Left lung (tissue), 14 donors: ENCODE measurements at regions of chr1 and their contacts with region 1.

Region 1: DNA sequence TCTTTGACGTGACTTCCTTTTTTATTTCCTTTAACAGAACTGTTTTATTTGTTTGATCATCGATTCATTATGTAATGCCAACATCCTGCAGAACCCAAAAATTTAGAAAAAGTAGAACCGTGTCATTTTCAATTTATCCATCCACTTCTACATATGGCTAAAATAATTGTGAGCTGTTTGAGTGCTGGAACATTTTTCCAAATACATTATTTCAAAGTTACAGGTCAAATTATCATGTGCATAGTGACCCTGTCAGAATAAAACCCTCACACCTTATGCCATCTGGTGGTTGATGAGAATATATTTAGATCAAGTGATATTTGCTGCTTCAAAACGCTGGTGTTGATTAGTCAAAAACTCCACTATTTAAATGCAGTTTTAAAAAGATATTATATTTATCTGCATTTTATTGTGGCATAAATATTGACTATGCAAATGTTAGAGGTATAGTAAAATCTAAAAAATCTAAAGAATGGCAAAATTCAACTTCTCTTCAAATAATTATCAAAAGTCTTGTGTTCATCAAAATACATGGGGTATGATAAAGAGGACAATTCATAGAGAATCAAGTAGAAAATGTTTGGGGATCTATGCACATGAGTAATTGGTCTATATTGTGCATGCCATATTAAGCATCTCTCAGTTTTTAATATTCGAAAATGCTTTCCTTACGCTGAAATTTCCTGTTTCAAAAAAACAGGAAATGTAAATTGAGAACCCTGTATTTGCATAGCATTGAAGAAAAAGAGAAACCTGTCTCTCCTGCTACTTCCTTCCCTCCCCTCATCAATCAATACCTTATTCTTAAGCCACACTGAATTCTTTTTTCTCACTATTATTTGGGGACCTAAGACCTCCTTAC is 39.7 kb downstream of the UBE2U start:
- DNase-seq: peak in 1 of 4 donors; percentile 47
- ATAC-seq: peak; percentile 71
- H3K4me3 ChIP-seq: no peak overlapping the region
- H3K27ac ChIP-seq: no peak overlapping the region
- H3K4me1 ChIP-seq: no peaks in the 10 kb centered on the region
- H3K27me3 ChIP-seq: peaks cover 0 to 9% of the 10 kb centered on the region in 2 donors
- CTCF ChIP-seq: peak in 1 of 2 donors; percentile 33

Region 2: GRCh38 chr1:63615768-63616420 is 627.2 kb before region 1 on chr1:
- intact Hi-C with region 1: loop called in 1 of 2 experiments (anchors 5 kb)
- DNase-seq: peak in 3 of 4 donors; percentile 42 to 83 (median 77)
- ATAC-seq: peak; percentile 76
- H3K4me3 ChIP-seq: no peak overlapping the region
- H3K27ac ChIP-seq: no peak overlapping the region
- H3K4me1 ChIP-seq: peaks cover 5 to 19% of the 10 kb centered on the region in 2 donors
- H3K27me3 ChIP-seq: no peaks in the 10 kb centered on the region
- CTCF ChIP-seq: peak; percentile 79 to 90

Region 3: GRCh38 chr1:63674238-63674864 is 568.8 kb before region 1 on chr1:
- intact Hi-C with region 1: loop called in 1 of 2 experiments (anchors 10 kb)
- DNase-seq: peak in 3 of 4 donors; percentile 60 to 96 (median 87)
- ATAC-seq: peak; percentile 93
- H3K4me3 ChIP-seq: no peak overlapping the region
- H3K27ac ChIP-seq: no peak overlapping the region
- H3K4me1 ChIP-seq: peaks cover 0 to 2% of the 10 kb centered on the region in 2 donors
- H3K27me3 ChIP-seq: no peaks in the 10 kb centered on the region
- CTCF ChIP-seq: peak; percentile 29 to 49

Region 4: GRCh38 chr1:64098846-64099606 is 144.1 kb before region 1 on chr1:
- intact Hi-C with region 1: no loop called
- DNase-seq: peak in 1 of 4 donors; percentile 19
- ATAC-seq: no peak
- H3K4me3 ChIP-seq: no peak overlapping the region
- H3K27ac ChIP-seq: no peak overlapping the region
- H3K4me1 ChIP-seq: no peaks in the 10 kb centered on the region
- H3K27me3 ChIP-seq: no peaks in the 10 kb centered on the region
- CTCF ChIP-seq: no peak

Region 5: DNA sequence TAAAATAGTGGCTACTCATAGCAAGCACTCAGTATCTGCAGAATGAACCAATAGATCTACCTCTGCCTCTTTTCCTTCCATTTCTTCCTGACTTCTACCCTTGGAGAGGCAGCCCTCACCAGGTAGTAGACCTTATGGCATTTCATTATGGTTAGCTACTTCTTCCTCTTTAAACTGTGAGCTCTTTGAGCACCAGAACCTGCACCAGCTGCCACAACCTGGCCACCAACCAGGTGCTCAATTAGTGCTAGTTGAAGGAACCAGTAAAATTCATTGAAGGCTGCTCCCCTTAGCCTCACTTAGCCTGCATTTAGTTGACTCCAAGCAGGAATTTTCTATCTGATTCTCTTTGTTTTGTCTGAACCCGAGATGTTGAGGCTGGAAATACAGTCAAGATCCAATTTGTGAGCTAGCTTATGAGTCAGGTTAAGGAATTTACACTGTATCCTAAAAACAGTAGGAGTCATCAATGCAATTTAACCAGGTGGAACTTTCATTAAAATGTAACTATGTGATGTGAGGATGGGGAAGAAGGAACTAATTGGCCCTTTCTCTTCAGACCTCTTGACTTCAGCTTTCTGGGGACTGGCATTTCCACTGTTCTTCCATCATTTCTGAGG is 121.2 kb before region 1 on chr1:
- intact Hi-C with region 1: no loop called
- DNase-seq: no peak
- ATAC-seq: no peak
- H3K4me3 ChIP-seq: no peak overlapping the region
- H3K27ac ChIP-seq: no peak overlapping the region
- H3K4me1 ChIP-seq: no peaks in the 10 kb centered on the region
- H3K27me3 ChIP-seq: no peaks in the 10 kb centered on the region
- CTCF ChIP-seq: no peak

Region 6: DNA sequence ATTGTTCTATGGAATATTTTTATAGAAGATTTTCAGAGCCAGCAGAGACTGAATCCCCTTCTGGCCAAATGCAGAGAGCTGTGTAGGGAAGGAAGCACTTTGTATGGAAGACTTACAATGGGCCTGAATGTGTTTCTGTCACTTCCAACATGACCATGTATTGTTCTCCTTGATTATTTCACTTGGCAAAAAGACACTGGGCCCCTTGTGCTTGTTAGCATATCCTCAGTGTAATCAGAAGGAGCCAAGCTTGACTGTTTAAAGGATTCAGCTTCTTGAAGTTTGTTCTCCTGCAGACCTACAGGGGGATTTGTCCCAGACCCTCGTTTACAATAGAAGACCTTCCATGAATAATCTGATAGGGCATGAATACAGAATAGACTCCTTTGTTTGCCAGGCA is 87.8 kb before region 1 on chr1:
- intact Hi-C with region 1: no loop called
- DNase-seq: no peak
- ATAC-seq: no peak
- H3K4me3 ChIP-seq: no peak overlapping the region
- H3K27ac ChIP-seq: no peak overlapping the region
- H3K4me1 ChIP-seq: no peaks in the 10 kb centered on the region
- H3K27me3 ChIP-seq: no peaks in the 10 kb centered on the region
- CTCF ChIP-seq: no peak

Region 7: GRCh38 chr1:64337475-64337874 is 94.3 kb after region 1 on chr1:
- intact Hi-C with region 1: no loop called
- DNase-seq: no peak
- ATAC-seq: no peak
- H3K4me3 ChIP-seq: no peak overlapping the region
- H3K27ac ChIP-seq: no peak overlapping the region
- H3K4me1 ChIP-seq: no peaks in the 10 kb centered on the region
- H3K27me3 ChIP-seq: no peaks in the 10 kb centered on the region
- CTCF ChIP-seq: no peak